ENCODE measurements at regions of chr2 and their contacts with region 1.

Region 1: GRCh38 chr2:74147727-74148456 is at the start of gene BOLA3:
- DNase-seq: peak; percentile 94
- H3K27ac ChIP-seq: peak within 1 kb of the TSS; percentile 79
- CTCF ChIP-seq: peak; percentile 91

Region 2: DNA sequence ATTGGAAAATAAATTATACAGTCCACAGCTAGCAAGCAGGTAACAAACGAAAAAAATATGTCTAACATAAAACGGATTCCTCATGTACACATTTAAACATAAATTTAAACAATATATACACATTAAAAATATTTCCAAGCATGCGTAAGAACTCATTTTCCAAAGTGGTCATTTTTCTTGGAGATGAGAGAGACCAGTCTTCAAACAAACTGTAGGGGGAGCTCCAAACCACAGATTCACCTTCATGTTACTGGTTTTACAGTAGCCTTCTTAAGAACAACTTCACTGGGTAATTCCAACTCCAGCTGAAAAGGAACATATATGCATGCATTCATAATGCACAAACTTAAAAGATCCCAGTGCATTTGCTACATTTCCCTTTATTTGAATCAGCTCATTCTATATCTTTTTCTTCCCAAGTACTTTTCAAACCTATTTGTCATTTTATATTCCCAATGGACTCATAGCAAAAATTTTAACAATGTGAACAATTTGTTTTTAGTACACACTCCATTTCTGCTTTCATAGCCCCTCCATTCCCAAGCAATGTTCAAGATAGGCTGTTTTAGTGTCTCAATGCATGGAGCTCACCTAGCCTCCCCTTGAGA is 323.9 kb before region 1 on chr2:
- CTCF ChIA-PET with region 1: interaction called, 18 read pairs
- POLR2A ChIA-PET with region 1: no interaction called
- DNase-seq: peak; percentile 55
- H3K27ac ChIP-seq: no peak overlapping the region
- CTCF ChIP-seq: peak; percentile 85

Region 3: DNA sequence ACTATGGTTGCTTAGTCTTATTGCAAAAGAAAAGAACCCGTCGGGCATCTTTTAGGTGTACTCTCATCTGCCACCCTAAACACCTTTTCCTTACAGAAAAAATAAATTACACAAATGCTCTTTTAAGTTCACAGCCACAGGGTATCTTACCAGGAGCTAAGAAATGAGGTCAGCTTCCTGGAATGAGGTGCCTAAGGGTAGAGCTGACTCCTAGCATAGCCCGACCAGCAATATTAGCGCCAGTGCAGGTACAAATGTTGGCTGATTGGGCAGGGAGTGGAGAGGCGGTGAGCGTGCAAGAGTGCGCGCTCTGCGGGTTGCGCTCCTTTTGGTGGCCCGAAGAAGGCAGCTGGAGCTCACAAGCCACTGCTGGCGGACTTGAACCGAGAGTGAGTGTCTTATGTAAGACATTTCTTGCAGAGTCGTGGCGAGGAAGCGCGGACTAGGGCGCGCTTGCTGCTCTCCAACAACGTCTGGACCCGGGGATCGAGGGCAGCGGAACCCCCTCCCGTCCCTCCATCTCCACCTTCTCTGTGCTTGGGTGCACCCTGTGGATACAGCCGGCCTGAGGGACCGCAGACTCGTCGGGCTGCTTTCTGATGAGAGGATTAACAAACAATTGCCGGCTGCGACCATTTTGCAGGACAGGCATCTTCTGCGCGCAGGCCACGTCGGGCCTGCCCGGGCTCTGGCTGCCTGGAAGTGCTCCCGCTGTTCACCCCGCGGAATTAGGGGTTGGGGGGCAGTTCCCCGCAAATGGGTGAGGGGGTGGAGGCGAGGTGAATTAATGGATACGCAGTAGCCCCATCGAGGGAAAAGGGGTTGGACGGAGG is 17.5 kb before region 1 on chr2:
- CTCF ChIA-PET with region 1: no interaction called
- POLR2A ChIA-PET with region 1: no interaction called
- DNase-seq: peak; percentile 70
- H3K27ac ChIP-seq: no peak overlapping the region
- CTCF ChIP-seq: no peak

Region 4: DNA sequence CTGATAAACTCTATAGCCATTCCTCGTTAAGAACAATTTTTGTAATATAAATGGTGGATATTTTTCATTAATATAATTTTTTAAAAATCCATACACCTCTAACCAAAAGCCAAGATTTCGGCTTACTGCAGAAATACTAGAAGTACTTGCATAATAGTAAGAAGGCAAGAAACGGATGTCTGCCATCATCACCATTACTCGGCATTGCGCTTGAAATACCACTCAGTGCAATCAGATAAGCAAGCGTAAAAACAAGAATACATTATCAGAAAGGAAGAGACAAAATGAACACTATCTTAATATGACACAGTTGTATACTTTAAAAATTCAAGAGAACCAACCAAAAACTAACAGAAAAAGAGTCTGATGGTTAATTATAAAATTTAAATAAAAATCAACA is 15.1 kb after region 1 on chr2:
- CTCF ChIA-PET with region 1: interaction called, 11 read pairs
- POLR2A ChIA-PET with region 1: no interaction called
- DNase-seq: no peak
- H3K27ac ChIP-seq: no peak overlapping the region
- CTCF ChIP-seq: no peak

Region 5: GRCh38 chr2:74226648-74227213 is 78.8 kb after region 1 on chr2:
- CTCF ChIA-PET with region 1: no interaction called
- POLR2A ChIA-PET with region 1: no interaction called
- DNase-seq: peak; percentile 40
- H3K27ac ChIP-seq: peak overlapping the region; percentile 77
- CTCF ChIP-seq: no peak